Heart right ventricle (tissue), 16 donors: ENCODE measurements at regions of chr3 and their contacts with region 1.

Region 1: GRCh38 chr3:138824114-138824506 is 10.6 kb downstream of the PIK3CB start:
- DNase-seq: no peak
- ATAC-seq: no peak
- H3K4me3 ChIP-seq: no peak overlapping the region
- H3K27ac ChIP-seq: no peak overlapping the region
- H3K4me1 ChIP-seq: peaks cover 0 to 23% (median 14%) of the 10 kb centered on the region in 9 donors
- H3K27me3 ChIP-seq: no peaks in the 10 kb centered on the region
- CTCF ChIP-seq: no peak

Region 2: GRCh38 chr3:138726946-138727730 is 97.0 kb before region 1 on chr3:
- intact Hi-C with region 1: loop called in 1 of 10 experiments (anchors 10 kb)
- DNase-seq: no peak
- ATAC-seq: no peak
- H3K4me3 ChIP-seq: no peak overlapping the region
- H3K27ac ChIP-seq: no peak overlapping the region
- H3K4me1 ChIP-seq: peaks cover 0 to 18% (median 11%) of the 10 kb centered on the region in 9 donors
- H3K27me3 ChIP-seq: no peaks in the 10 kb centered on the region
- CTCF ChIP-seq: no peak

Region 3: DNA sequence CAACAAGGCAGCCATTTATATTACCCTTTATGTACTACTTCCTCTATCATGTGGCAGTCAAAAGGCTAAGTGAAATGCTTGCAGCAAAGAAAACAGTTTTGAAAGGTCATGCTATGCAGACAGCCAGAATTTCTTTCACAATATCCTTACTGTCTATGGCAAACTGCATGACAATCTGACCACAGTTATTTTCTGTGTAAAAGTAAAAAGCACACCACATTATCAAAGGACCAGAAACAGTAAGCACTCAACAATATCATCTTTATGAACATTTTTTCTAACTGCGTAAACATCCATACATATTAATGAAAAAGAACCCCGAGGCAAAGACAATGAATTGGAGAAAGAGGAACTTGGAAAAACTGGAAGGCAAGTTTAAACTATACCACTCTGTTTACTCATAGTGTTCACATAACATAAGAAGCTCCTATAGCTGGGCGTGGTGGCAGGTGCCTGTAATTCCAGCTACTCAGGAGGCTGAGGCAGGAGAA is 37.3 kb before region 1 on chr3:
- intact Hi-C with region 1: no loop called
- DNase-seq: no peak
- ATAC-seq: peak in 2 of 8 donors; percentile 62 to 80
- H3K4me3 ChIP-seq: peak overlapping the region in 1 of 10 donors; percentile 18
- H3K27ac ChIP-seq: peak overlapping the region in 2 of 10 donors; percentile 3 to 83
- H3K4me1 ChIP-seq: peaks cover 0 to 26% (median 0%) of the 10 kb centered on the region in 9 donors
- H3K27me3 ChIP-seq: no peaks in the 10 kb centered on the region
- CTCF ChIP-seq: no peak